HEK293 (cell line): ENCODE measurements at regions of chr11 and their contacts with region 1.

Region 1: DNA sequence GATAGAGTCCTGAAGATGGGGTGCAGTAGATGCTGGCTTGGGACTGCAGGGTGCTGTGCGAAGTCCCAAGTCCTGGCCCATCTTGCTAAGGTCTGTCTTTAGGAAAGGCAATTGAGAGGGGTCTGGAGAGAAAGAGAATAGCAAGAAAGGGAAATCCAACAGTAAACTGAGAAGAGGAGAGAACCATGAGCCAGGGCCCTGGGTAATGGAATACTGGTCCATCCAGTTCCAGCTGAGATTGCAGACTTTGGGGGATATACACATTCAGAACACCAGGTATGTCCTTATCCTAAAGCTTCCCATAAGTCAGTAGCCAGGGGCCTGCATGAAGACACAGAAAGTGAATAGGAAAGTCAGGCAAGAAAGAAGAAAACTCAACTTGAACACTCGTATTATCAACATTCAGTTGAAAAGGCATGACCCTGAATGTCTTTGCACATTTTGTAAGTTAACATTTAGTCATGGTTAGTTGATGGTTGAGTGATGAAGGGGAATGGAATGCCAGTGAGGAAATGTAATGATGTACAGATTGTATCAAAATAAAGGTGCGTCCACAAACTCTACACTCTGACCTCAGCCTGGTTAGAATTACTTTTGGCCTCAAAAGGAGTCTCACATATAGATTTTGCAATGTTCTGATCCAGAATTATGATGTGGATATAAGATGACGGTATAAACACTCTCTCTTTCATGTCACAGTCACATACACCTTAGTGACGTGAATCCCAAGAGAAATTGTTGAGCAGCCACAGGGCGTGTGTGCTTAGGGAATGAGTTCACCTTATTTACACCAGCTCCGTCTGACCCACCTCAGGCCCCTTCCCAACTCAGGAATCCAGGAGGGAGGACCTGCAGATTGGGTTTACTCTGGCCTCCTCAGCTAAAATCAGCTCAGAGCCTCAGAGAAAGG is 100.3 kb downstream of the RDX start:
- H3K4me3 ChIP-seq: no peak overlapping the region
- H3K27ac ChIP-seq: no peak overlapping the region
- H3K4me1 ChIP-seq: no peaks in the 10 kb centered on the region
- CTCF ChIP-seq: no peak

Region 2: GRCh38 chr11:110366291-110366690 is 170.2 kb after region 1 on chr11:
- CTCF ChIA-PET with region 1: interaction called, 55 read pairs
- POLR2A ChIA-PET with region 1: interaction called, 6 read pairs
- H3K4me3 ChIP-seq: no peak overlapping the region
- H3K27ac ChIP-seq: no peak overlapping the region
- H3K4me1 ChIP-seq: no peaks in the 10 kb centered on the region
- CTCF ChIP-seq: no peak

Region 3: DNA sequence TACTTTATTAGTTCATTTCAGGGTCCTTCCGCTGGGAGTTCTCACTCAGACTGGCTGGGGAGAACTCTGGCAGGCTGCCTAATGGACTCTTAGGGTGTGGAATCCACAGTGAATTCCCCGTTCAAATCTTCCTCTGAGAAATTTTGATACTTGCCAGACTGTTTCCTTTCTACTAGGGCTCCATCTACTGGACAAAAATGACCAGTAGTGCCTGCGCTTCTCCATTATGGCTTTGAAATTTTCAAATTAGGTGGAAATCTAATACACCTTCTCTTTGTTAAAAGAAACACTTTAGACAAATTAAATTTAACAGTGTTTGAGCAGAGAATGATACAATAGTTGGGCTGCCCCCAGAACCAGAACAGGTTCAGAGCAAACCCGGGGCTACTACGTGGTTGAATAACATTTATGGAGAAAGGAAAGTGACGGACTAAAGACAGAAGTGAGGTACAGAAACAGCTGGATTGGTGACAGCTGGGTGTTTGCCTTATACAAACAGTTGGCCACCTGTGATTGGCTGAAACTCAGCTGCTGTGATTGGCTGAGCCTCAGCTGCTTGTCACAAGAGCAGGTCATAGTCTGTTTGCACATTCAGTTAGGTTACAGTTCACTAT is 180.7 kb after region 1 on chr11:
- CTCF ChIA-PET with region 1: interaction called, 29 read pairs
- POLR2A ChIA-PET with region 1: no interaction called
- H3K4me3 ChIP-seq: no peak overlapping the region
- H3K27ac ChIP-seq: 0 out of 2 replicates have a peak overlapping the region, but pooled peaks have one; percentile 10
- H3K4me1 ChIP-seq: no peaks in the 10 kb centered on the region
- CTCF ChIP-seq: peak; percentile 37; the same call in 1 of the 2 replicates

Region 4: GRCh38 chr11:110429731-110430266 is 233.7 kb after region 1 on chr11 and contains the start of gene FDX1:
- CTCF ChIA-PET with region 1: interaction called, 76 read pairs
- POLR2A ChIA-PET with region 1: no interaction called
- H3K4me3 ChIP-seq: peak within 1 kb of the TSS; percentile 56
- H3K27ac ChIP-seq: peak within 1 kb of the TSS; percentile 90
- H3K4me1 ChIP-seq: no peaks in the 10 kb centered on the region; the same call in 1 of the 2 replicates
- CTCF ChIP-seq: no peak

Region 5: GRCh38 chr11:110755941-110756340 is 559.8 kb after region 1 on chr11:
- CTCF ChIA-PET with region 1: no interaction called
- POLR2A ChIA-PET with region 1: no interaction called
- H3K4me3 ChIP-seq: no peak overlapping the region
- H3K27ac ChIP-seq: no peak overlapping the region
- H3K4me1 ChIP-seq: no peaks in the 10 kb centered on the region; the same call in 1 of the 2 replicates
- CTCF ChIP-seq: no peak